Heart right ventricle (tissue), 16 donors: ENCODE measurements at regions of chr5 and their contacts with region 1.

Region 1: GRCh38 chr5:116626272-116626723 is 51.7 kb upstream of the SEMA6A start:
- DNase-seq: peak; percentile 55 to 92
- ATAC-seq: peak; percentile 71 to 97 (median 92)
- H3K4me3 ChIP-seq: peak overlapping the region in 4 of 10 donors; percentile 14 to 26 (median 24)
- H3K27ac ChIP-seq: peak overlapping the region in 9 of 10 donors; percentile 19 to 80 (median 47)
- H3K4me1 ChIP-seq: peaks cover 0 to 19% (median 12%) of the 10 kb centered on the region in 9 donors
- H3K27me3 ChIP-seq: no peaks in the 10 kb centered on the region
- CTCF ChIP-seq: no peak

Region 2: GRCh38 chr5:116492016-116492623 is 134.2 kb before region 1 on chr5:
- intact Hi-C with region 1: no loop called
- DNase-seq: no peak
- ATAC-seq: peak in 7 of 8 donors; percentile 36 to 66 (median 58)
- H3K4me3 ChIP-seq: no peak overlapping the region
- H3K27ac ChIP-seq: peak overlapping the region in 5 of 10 donors; percentile 7 to 56 (median 24)
- H3K4me1 ChIP-seq: peaks cover 0 to 22% (median 11%) of the 10 kb centered on the region in 9 donors
- H3K27me3 ChIP-seq: no peaks in the 10 kb centered on the region
- CTCF ChIP-seq: no peak

Region 3: GRCh38 chr5:116574367-116575325 is 51.7 kb before region 1 on chr5 and contains the start of gene SEMA6A:
- intact Hi-C with region 1: loop called in 1 of 10 experiments (anchors 5 kb)
- DNase-seq: peak; percentile 92 to 93
- ATAC-seq: peak; percentile 86 to 95 (median 89)
- H3K4me3 ChIP-seq: peak within 1 kb of the TSS; percentile 54 to 85 (median 72)
- H3K27ac ChIP-seq: peak within 1 kb of the TSS; percentile 51 to 91 (median 80)
- H3K4me1 ChIP-seq: peaks cover 0 to 61% (median 38%) of the 10 kb centered on the region in 9 donors
- H3K27me3 ChIP-seq: peaks cover 0 to 80% (median 20%) of the 10 kb centered on the region in 7 donors
- CTCF ChIP-seq: peak in 3 of 9 donors; percentile 12 to 27 (median 13)
- total RNA-seq, gene SEMA6A: 2.9 to 11.3 (median 8.3) TPM